ENCODE measurements at regions of chr9 and their contacts with region 1.

Region 1: GRCh38 chr9:124197177-124198095 is 60.3 kb upstream of the NEK6 start:
- DNase-seq: peak; percentile 47
- ATAC-seq: peak; percentile 86
- H3K4me3 Mint-ChIP-seq: peak overlapping the region; percentile 72
- H3K27ac Mint-ChIP-seq: peak overlapping the region; percentile 96
- H3K4me1 Mint-ChIP-seq: peaks cover 65% of the 10 kb centered on the region
- H3K27me3 Mint-ChIP-seq: no peaks in the 10 kb centered on the region
- CTCF ChIP-seq: no peak

Region 2: DNA sequence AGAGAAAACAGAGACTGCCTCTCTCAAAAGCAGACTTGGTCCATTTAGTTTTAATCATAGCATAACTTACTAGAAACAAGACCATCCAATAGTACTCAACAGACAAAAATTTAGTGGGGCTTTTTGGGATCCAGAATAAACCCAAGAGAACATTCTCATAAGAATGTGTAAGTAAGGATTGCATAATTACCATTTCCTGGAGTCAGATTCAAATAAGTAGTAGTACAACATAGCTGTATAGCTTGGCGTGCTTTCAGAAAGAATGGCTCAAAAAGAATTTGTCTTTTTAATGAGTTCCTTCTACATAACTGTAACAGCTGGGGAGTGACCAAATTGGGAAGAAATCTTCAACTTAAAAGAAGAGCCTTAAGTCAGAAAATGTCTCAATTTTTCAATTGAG is 412.9 kb before region 1 on chr9:
- CTCF ChIA-PET with region 1: no interaction called
- POLR2A ChIA-PET with region 1: no interaction called
- intact Hi-C with region 1: no loop called
- DNase-seq: no peak
- ATAC-seq: no peak
- H3K4me3 Mint-ChIP-seq: no peak overlapping the region
- H3K27ac Mint-ChIP-seq: no peak overlapping the region
- H3K4me1 Mint-ChIP-seq: no peaks in the 10 kb centered on the region
- H3K27me3 Mint-ChIP-seq: no peaks in the 10 kb centered on the region
- CTCF ChIP-seq: no peak

Region 3: GRCh38 chr9:123929870-123930831 is 267.3 kb before region 1 on chr9 and contains the start of gene DENND1A:
- CTCF ChIA-PET with region 1: no interaction called
- POLR2A ChIA-PET with region 1: no interaction called
- intact Hi-C with region 1: loop called (anchors 5 kb)
- DNase-seq: peak; percentile 86
- ATAC-seq: peak; percentile 92
- H3K4me3 Mint-ChIP-seq: peak within 1 kb of the TSS; percentile 85
- H3K27ac Mint-ChIP-seq: peak within 1 kb of the TSS; percentile 57
- H3K4me1 Mint-ChIP-seq: peaks cover 38% of the 10 kb centered on the region
- H3K27me3 Mint-ChIP-seq: no peaks in the 10 kb centered on the region
- CTCF ChIP-seq: no peak
- total RNA-seq, gene DENND1A: 21.8 and 25.2 TPM in 2 replicates

Region 4: GRCh38 chr9:124210697-124211096 is 13.3 kb after region 1 on chr9:
- CTCF ChIA-PET with region 1: interaction called, 6 read pairs
- POLR2A ChIA-PET with region 1: interaction called, 256 read pairs
- intact Hi-C with region 1: loop called (anchors 1 kb)
- DNase-seq: no peak
- ATAC-seq: peak; percentile 87
- H3K4me3 Mint-ChIP-seq: peak overlapping the region; percentile 63
- H3K27ac Mint-ChIP-seq: peak overlapping the region; percentile 81
- H3K4me1 Mint-ChIP-seq: peaks cover 97% of the 10 kb centered on the region
- H3K27me3 Mint-ChIP-seq: no peaks in the 10 kb centered on the region
- CTCF ChIP-seq: no peak

Region 5: DNA sequence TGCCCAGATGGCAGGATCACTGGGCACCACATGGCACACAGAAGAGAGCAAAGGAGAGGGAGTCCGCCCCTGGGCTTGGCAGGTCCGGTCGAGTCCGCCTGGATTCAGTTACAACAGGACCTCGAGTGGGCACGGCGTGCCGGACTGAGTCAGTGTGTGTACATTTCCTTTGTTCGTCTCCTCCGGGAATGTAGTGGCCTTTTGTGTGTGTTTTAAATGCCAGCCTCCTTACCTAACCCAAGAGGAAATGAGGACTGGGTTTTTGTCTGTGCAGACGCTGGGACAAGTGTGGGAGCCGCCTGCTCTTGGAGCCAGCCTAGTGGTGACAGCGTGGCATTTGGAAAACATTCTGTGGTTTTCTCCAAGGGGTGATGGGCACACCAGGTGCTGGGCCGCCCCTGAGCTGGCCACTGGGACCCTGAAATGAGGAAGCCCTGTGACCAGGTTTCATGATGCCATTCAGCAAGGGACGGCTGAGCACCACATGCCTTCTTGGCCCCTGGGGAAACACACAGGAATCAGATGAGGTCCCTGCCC is 69.9 kb after region 1 on chr9:
- CTCF ChIA-PET with region 1: interaction called, 8 read pairs
- POLR2A ChIA-PET with region 1: interaction called, 11 read pairs
- intact Hi-C with region 1: loop called (anchors 1 kb)
- DNase-seq: peak; percentile 43
- ATAC-seq: peak; percentile 49
- H3K4me3 Mint-ChIP-seq: peak overlapping the region; percentile 66
- H3K27ac Mint-ChIP-seq: peak overlapping the region; percentile 88
- H3K4me1 Mint-ChIP-seq: peaks cover 95% of the 10 kb centered on the region
- H3K27me3 Mint-ChIP-seq: no peaks in the 10 kb centered on the region
- CTCF ChIP-seq: no peak

Region 6: GRCh38 chr9:124415102-124415851 is 217.8 kb after region 1 on chr9 and contains the start of gene PSMB7:
- CTCF ChIA-PET with region 1: no interaction called
- POLR2A ChIA-PET with region 1: no interaction called
- intact Hi-C with region 1: loop called (anchors 1 kb)
- DNase-seq: peak; percentile 91
- ATAC-seq: peak; percentile 94
- H3K4me3 Mint-ChIP-seq: peak within 1 kb of the TSS; percentile 99
- H3K27ac Mint-ChIP-seq: peak within 1 kb of the TSS; percentile 94
- H3K4me1 Mint-ChIP-seq: peaks cover 25% of the 10 kb centered on the region
- H3K27me3 Mint-ChIP-seq: no peaks in the 10 kb centered on the region
- CTCF ChIP-seq: peak; percentile 38
- total RNA-seq, gene PSMB7: 120 and 140 TPM in 2 replicates

Measured in activated B cell treated with CpG ODN at 0.5 μM for 24 hours (primary cell).